CD14-positive monocyte (primary cell): ENCODE measurements at regions of chr17 and their contacts with region 1.

Region 1: DNA sequence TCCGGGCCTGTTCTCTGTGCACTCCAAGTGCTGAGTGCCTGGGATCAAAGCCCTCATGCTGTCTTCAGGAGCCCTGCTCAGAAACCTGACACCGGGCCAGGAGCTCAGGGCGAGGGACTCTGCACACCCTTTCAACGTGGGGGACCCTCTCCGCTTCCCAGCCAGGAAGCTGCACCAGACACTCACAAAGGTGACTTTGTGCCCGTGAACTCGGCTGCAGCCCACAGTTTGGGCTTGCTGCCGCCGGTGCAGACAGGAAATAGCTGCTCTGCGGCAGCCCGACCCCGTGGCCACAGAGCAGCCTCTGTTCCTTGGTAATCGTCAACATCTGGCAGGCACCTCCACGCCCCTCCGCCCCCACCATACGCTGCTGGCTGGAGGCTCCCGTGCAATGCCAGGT is 93.4 kb upstream of the METRNL start:
- DNase-seq: no peak
- H3K4me3 ChIP-seq: peak overlapping the region in 1 of 3 experiments; percentile 47
- H3K4me3 Mint-ChIP-seq: peak overlapping the region; percentile 74 to 91
- H3K27ac ChIP-seq: no peak overlapping the region
- H3K27ac Mint-ChIP-seq: peak overlapping the region in 5 of 7 donors; percentile 10 to 74 (median 30)
- H3K4me1 ChIP-seq: peaks cover 13 to 16% of the 10 kb centered on the region in 2 donors
- H3K4me1 Mint-ChIP-seq: peaks cover 20% of the 10 kb centered on the region
- H3K27me3 ChIP-seq: no peaks in the 10 kb centered on the region
- H3K27me3 Mint-ChIP-seq: peaks cover 0 to 3% (median 2%) of the 10 kb centered on the region in 3 donors
- CTCF ChIP-seq: no peak

Region 2: DNA sequence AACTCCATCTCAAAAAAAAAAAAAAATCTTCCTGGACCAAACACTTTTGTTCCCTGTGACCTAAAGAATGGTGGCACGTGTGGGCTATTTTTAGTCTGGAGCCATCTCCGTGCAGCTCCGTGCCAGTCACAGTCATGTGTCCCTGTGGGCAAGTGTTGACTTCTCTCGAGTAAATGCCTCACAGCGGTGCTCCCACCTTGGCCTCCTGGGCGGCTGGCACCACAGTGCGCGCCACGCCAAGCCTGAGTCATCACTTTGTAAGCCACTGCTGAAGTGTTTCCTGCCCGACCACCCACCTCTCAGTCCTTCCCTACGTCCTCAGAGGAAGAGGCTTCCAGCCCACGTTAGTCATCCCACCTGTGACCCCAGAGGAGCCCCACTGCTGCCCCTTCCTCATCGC is 578.7 kb before region 1 on chr17:
- intact Hi-C with region 1: no loop called
- DNase-seq: peak in 2 of 3 donors; percentile 18 to 41
- H3K4me3 ChIP-seq: no peak overlapping the region
- H3K4me3 Mint-ChIP-seq: no peak overlapping the region
- H3K27ac ChIP-seq: no peak overlapping the region
- H3K27ac Mint-ChIP-seq: peak overlapping the region in 1 of 7 donors; percentile 46
- H3K4me1 ChIP-seq: peaks cover 3 to 8% of the 10 kb centered on the region in 2 donors
- H3K4me1 Mint-ChIP-seq: peaks cover 13% of the 10 kb centered on the region
- H3K27me3 ChIP-seq: no peaks in the 10 kb centered on the region
- H3K27me3 Mint-ChIP-seq: peaks cover 0 to 5% (median 3%) of the 10 kb centered on the region in 3 donors
- CTCF ChIP-seq: no peak

Region 3: DNA sequence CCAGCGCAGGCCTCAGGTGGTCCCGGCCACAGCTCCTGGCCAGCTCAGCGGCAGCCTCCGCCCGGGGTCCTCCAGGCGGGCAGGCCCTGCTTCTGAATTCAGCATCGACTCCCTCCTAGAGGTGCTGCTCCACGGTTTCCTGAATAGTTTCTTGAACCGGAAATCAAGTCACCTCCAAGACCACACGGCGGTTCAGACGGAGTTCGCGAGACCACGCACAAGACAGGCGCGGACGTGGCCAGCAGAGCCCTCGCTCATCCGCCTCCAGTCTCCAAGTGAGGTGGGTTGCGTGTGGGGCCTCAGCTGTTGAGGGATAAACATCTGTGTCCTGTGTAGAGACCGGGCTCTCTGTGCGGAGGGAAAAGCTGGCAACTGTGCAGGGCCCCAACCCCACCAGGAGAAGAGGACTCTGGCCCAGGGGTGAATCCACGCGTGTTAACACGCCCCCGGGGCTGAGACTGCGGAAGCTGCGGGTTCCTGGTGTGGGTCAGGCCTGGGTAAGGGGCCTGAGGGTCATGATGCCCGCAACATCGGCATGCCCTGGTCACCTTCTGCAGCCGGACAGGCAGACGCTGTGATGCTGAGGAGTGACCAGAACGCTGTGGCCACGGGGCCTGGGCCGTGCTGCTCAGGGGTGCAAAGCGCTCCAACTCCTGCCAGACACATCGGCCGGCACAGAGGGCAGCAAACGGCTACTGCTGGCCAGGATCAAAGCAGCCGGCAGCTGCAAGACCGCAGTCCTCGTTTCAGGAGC is 38.4 kb after region 1 on chr17:
- intact Hi-C with region 1: no loop called
- DNase-seq: no peak
- H3K4me3 ChIP-seq: no peak overlapping the region
- H3K4me3 Mint-ChIP-seq: no peak overlapping the region
- H3K27ac ChIP-seq: no peak overlapping the region
- H3K27ac Mint-ChIP-seq: peak overlapping the region in 1 of 7 donors; percentile 68
- H3K4me1 ChIP-seq: no peaks in the 10 kb centered on the region
- H3K4me1 Mint-ChIP-seq: peaks cover 4% of the 10 kb centered on the region
- H3K27me3 ChIP-seq: no peaks in the 10 kb centered on the region
- H3K27me3 Mint-ChIP-seq: peaks cover 0 to 2% (median 0%) of the 10 kb centered on the region in 3 donors
- CTCF ChIP-seq: no peak

Region 4: GRCh38 chr17:83041305-83041704 is 55.3 kb after region 1 on chr17:
- intact Hi-C with region 1: loop called in 1 of 2 experiments (anchors 5 kb)
- DNase-seq: no peak
- H3K4me3 ChIP-seq: peak overlapping the region in 1 of 3 experiments; percentile 4
- H3K4me3 Mint-ChIP-seq: no peak overlapping the region
- H3K27ac ChIP-seq: no peak overlapping the region
- H3K27ac Mint-ChIP-seq: peak overlapping the region in 3 of 7 donors; percentile 2 to 26 (median 14)
- H3K4me1 ChIP-seq: peaks cover 3 to 8% of the 10 kb centered on the region in 2 donors
- H3K4me1 Mint-ChIP-seq: peaks cover 3% of the 10 kb centered on the region
- H3K27me3 ChIP-seq: no peaks in the 10 kb centered on the region
- H3K27me3 Mint-ChIP-seq: no peaks in the 10 kb centered on the region
- CTCF ChIP-seq: no peak